Activated CD4-positive, alpha-beta memory T cell treated with anti-CD3 and anti-CD28 coated beads, Interleukin-2, amount 10 ng/mL, durations not matched to agents 7 days and 5 days (primary cell): ENCODE measurements at regions of chr15 and their contacts with region 1.

Region 1: DNA sequence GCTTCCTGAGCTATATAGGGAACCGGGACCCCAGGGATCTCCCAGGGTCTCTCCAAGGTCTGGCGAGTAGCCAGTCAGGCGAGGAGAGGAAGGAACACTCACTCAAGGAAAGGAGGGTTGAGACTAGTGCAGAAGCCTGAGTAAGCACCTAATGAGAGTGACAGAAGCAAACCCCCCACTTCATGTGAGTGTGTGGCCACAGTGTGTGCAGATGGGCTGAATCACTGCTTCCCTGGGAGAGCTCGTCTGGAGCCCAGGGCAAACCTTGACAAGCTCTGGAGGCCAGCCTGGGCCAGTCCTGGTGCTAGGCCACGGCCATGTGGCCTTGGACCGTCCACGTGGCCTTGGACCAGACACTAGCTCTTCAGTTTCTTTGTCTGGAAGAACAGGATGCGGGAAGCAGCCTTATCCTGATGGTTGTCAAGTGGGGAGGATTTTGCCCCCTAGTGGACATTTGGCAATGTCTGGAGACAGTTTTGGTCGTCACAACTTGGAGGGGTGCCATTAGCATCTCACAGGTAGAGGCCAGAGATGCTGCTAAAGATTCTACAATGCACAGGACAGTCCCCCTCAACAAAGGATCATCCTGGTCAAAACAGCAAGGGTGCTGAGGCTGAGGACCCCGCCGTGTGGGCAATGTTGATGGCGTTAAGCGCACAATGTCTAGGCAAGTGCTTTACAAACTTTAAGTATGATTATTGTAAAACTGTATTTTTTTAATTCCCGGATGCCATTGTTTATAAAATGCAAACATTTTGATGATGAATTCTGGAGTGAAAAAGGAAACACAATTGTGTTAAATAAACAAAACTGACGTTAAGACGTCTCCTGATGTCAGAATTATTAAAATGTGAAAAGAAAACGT is 34.8 kb upstream of the CTSH start:
- DNase-seq: peak; percentile 50
- H3K4me3 Mint-ChIP-seq: no peak overlapping the region
- H3K27ac Mint-ChIP-seq: no peak overlapping the region
- H3K4me1 Mint-ChIP-seq: peaks cover 25% of the 10 kb centered on the region
- H3K27me3 Mint-ChIP-seq: peaks cover 8% of the 10 kb centered on the region

Region 2: GRCh38 chr15:78968539-78969271 is 11.0 kb before region 1 on chr15:
- CTCF ChIA-PET with region 1: interaction called, 14 read pairs
- POLR2A ChIA-PET with region 1: no interaction called
- DNase-seq: no peak
- H3K4me3 Mint-ChIP-seq: no peak overlapping the region
- H3K27ac Mint-ChIP-seq: no peak overlapping the region
- H3K4me1 Mint-ChIP-seq: no peaks in the 10 kb centered on the region
- H3K27me3 Mint-ChIP-seq: peaks cover 4% of the 10 kb centered on the region

Region 3: DNA sequence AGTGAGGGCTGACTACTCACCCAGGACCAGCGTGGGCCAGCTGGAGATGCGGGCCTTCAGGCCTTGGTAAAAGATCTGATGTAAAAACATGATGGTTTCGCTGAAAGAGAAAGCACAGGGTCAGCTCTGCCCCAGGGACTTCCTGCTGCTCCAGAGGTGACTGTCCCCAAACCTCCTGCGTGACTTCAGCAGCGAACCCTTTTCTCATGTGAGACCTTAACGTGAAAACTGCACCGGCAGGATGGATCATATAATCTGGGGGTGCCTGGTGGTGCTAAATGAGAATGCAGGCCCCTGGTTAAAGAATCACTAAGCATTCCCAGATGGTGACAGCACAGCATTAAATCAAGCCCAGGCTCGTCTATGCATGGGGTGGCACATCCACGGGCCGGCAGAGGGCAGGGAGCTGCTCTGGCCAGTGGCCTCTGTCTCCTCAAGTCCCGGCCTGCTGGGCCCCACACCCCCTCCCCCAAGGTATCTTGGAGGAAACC is 55.5 kb after region 1 on chr15:
- CTCF ChIA-PET with region 1: no interaction called
- POLR2A ChIA-PET with region 1: no interaction called
- DNase-seq: no peak
- H3K4me3 Mint-ChIP-seq: no peak overlapping the region
- H3K27ac Mint-ChIP-seq: no peak overlapping the region
- H3K4me1 Mint-ChIP-seq: no peaks in the 10 kb centered on the region
- H3K27me3 Mint-ChIP-seq: peaks cover 28% of the 10 kb centered on the region